CD4-positive, alpha-beta T cell (primary cell): ENCODE measurements at regions of chr10 and their contacts with region 1.

Region 1: GRCh38 chr10:97701438-97702069 is 12.0 kb upstream of the MARVELD1 start:
- DNase-seq: peak in 10 of 14 experiments; percentile 14 to 81 (median 32)
- ATAC-seq: peak; percentile 98
- H3K4me3 ChIP-seq: no peak overlapping the region
- H3K4me3 Mint-ChIP-seq: no peak overlapping the region
- H3K27ac ChIP-seq: no peak overlapping the region
- H3K27ac Mint-ChIP-seq: no peak overlapping the region
- H3K4me1 ChIP-seq: peaks cover 5% of the 10 kb centered on the region
- H3K4me1 Mint-ChIP-seq: no peaks in the 10 kb centered on the region
- H3K27me3 ChIP-seq: peaks cover 0 to 7% of the 10 kb centered on the region in 2 experiments
- H3K27me3 Mint-ChIP-seq: peaks cover 30% of the 10 kb centered on the region
- CTCF ChIP-seq: peak; percentile 70

Region 2: GRCh38 chr10:97669571-97669970 is 32.0 kb before region 1 on chr10:
- CTCF ChIA-PET with region 1: no interaction called
- POLR2A ChIA-PET with region 1: no interaction called
- intact Hi-C with region 1: no loop called
- DNase-seq: no peak
- ATAC-seq: no peak
- H3K4me3 ChIP-seq: no peak overlapping the region
- H3K4me3 Mint-ChIP-seq: no peak overlapping the region
- H3K27ac ChIP-seq: no peak overlapping the region
- H3K27ac Mint-ChIP-seq: no peak overlapping the region
- H3K4me1 ChIP-seq: no peaks in the 10 kb centered on the region
- H3K4me1 Mint-ChIP-seq: no peaks in the 10 kb centered on the region
- H3K27me3 ChIP-seq: no peaks in the 10 kb centered on the region
- H3K27me3 Mint-ChIP-seq: no peaks in the 10 kb centered on the region
- CTCF ChIP-seq: no peak

Region 3: DNA sequence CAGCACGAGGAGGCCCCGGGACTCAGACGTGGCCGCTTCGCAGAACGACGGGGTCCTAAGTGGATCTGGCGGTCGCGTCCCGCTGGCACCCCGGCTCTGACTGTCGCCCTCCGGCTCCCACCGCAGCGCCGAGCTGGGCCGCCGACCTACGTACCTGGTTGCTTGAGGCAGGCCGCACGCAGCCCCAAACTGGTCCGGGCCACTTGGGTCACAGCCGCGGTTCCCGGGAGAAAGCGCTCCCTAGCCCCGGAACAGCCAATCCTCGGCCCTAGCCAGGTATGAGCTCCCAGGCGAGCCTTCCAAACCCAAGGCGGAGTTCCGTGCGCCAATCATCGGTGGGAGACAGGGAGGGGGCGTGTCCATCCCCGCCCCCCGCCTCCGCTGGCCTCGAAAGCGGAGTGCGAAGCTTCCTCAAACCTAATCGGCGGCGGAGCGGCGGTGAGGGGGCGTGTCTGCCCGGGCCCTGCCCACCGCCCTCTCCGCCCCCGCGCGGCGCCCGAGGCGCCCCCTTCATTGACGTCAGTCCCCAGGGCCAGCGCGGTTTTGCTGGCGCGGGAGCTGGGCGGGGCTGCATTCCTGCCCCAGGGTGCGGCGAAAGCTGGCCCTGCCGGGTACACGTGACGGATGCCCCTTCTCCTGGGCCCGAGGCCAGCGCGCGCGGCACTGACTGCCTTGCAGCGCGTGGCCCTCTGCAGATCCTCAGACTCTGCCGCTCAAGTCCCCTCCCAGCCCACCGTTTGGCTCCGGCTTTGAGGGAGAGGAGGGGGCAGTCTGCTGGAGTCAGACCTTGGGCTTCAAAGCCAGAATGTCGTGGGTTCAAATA is 14.4 kb before region 1 on chr10 and contains the start of gene AVPI1:
- CTCF ChIA-PET with region 1: interaction called, 19 read pairs
- POLR2A ChIA-PET with region 1: interaction called, 14 read pairs
- intact Hi-C with region 1: no loop called
- DNase-seq: peak; percentile 90 to 98 (median 94)
- ATAC-seq: peak; percentile 91
- H3K4me3 ChIP-seq: peak within 1 kb of the TSS; percentile 82
- H3K4me3 Mint-ChIP-seq: peak within 1 kb of the TSS; percentile 90
- H3K27ac ChIP-seq: peak within 1 kb of the TSS; percentile 52 to 62
- H3K27ac Mint-ChIP-seq: peak within 1 kb of the TSS; percentile 75
- H3K4me1 ChIP-seq: peaks cover 35% of the 10 kb centered on the region
- H3K4me1 Mint-ChIP-seq: peaks cover 16% of the 10 kb centered on the region
- H3K27me3 ChIP-seq: no peaks in the 10 kb centered on the region
- H3K27me3 Mint-ChIP-seq: no peaks in the 10 kb centered on the region
- CTCF ChIP-seq: no peak
- total RNA-seq, gene AVPI1: 10.7 to 11.6 TPM

Region 4: DNA sequence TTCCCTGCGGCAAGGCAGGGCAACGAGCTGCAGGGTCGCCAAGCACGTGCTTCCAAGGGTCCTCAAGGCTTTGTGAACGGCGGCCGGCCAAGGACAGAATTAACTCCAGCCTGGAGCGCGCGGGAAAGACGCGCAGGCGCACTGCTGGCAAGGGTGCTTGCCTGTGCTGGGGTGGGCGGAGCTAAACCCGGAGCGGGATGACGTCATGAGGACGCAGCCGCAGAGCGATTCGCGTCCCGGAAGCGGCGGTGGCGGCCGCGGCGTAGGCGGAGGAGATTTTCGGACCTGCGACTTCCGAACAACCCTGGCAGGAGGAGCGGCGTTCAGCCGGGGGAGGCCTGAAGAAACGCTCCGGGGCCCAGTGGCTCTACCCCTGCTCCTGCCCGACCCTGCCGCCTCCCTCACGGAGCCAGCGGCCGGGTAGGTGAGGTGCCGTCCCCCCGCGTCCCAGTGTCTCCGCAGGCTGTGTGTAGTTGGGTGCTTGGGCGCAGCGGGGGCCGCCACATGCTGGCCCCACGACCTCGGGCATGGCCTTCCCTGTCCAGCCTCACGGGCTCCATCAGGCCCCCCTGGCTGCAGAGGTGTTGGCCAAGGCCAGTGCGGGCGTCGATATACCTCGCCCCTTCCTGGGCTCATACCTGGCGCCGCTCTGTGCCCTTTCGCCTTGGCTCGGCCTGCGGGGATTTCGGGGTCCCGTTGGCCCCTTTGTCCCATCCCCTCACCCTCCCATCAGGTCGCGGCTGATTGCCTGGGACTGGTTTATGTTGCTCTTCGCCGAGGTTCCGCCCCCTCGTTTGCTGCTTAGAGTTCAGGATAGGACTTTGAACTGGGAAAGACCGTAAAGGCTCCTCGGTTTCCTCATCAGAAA is 35.6 kb after region 1 on chr10 and contains the start of gene ZFYVE27:
- CTCF ChIA-PET with region 1: interaction called, 18 read pairs
- POLR2A ChIA-PET with region 1: interaction called, 6 read pairs
- intact Hi-C with region 1: no loop called
- DNase-seq: peak; percentile 91 to 98 (median 94)
- ATAC-seq: peak; percentile 90
- H3K4me3 ChIP-seq: peak within 1 kb of the TSS; percentile 80
- H3K4me3 Mint-ChIP-seq: peak within 1 kb of the TSS; percentile 97
- H3K27ac ChIP-seq: peak within 1 kb of the TSS; percentile 85 to 92
- H3K27ac Mint-ChIP-seq: peak within 1 kb of the TSS; percentile 92
- H3K4me1 ChIP-seq: peaks cover 37% of the 10 kb centered on the region
- H3K4me1 Mint-ChIP-seq: peaks cover 57% of the 10 kb centered on the region
- H3K27me3 ChIP-seq: no peaks in the 10 kb centered on the region
- H3K27me3 Mint-ChIP-seq: no peaks in the 10 kb centered on the region
- CTCF ChIP-seq: no peak
- total RNA-seq, gene ZFYVE27: 58.4 to 60.6 TPM

Region 5: DNA sequence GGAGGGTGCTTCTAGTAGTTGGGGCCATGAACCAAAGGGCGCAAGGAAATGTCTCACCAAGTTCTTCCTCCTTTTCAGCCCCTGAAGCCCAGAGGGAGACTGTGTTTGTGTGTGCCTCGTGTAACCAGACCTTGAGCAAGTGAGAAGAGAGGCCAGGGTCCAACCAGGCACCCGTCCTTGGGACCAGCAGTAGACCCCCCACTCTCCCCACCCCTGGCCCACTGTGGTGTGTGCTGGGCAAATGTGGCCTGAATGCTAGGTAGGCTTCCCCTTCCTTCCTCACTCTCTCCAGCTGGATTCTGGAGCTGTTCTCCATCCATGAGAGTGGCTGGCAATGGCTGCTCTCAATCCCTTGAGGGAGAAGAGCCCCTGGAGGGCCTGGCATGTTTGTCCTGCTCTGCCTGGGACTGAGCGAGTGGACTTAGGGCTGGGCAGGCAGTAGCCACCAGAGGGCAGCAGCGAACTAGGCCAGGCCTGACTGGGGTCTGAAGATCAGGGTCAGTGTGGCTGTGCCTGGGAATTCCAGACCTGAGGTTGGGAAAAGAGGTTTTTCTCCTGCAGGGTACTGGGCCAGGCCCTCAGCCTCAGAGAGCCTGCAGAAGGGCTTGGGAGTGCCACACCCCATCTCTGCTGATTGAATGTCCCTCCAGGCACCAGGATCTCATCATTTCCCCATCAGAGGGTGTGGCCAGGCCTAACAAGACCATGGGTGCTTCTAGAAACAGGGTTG is 57.8 kb after region 1 on chr10:
- CTCF ChIA-PET with region 1: no interaction called
- POLR2A ChIA-PET with region 1: no interaction called
- intact Hi-C with region 1: no loop called
- DNase-seq: peak; percentile 21 to 65 (median 42)
- ATAC-seq: peak; percentile 66
- H3K4me3 ChIP-seq: no peak overlapping the region
- H3K4me3 Mint-ChIP-seq: no peak overlapping the region
- H3K27ac ChIP-seq: no peak overlapping the region
- H3K27ac Mint-ChIP-seq: no peak overlapping the region
- H3K4me1 ChIP-seq: no peaks in the 10 kb centered on the region
- H3K4me1 Mint-ChIP-seq: no peaks in the 10 kb centered on the region
- H3K27me3 ChIP-seq: no peaks in the 10 kb centered on the region
- H3K27me3 Mint-ChIP-seq: no peaks in the 10 kb centered on the region
- CTCF ChIP-seq: peak; percentile 79

Region 6: GRCh38 chr10:98045785-98046389 is 344.3 kb after region 1 on chr10:
- CTCF ChIA-PET with region 1: no interaction called
- POLR2A ChIA-PET with region 1: no interaction called
- intact Hi-C with region 1: loop called (anchors 10 kb)
- DNase-seq: peak; percentile 29 to 78 (median 44)
- ATAC-seq: peak; percentile 88
- H3K4me3 ChIP-seq: no peak overlapping the region
- H3K4me3 Mint-ChIP-seq: no peak overlapping the region
- H3K27ac ChIP-seq: no peak overlapping the region
- H3K27ac Mint-ChIP-seq: no peak overlapping the region
- H3K4me1 ChIP-seq: peaks cover 3% of the 10 kb centered on the region
- H3K4me1 Mint-ChIP-seq: no peaks in the 10 kb centered on the region
- H3K27me3 ChIP-seq: peaks cover 13 to 25% of the 10 kb centered on the region in 2 experiments
- H3K27me3 Mint-ChIP-seq: peaks cover 39% of the 10 kb centered on the region
- CTCF ChIP-seq: peak; percentile 90